ENCODE measurements at regions of chr5 and their contacts with region 1.

Region 1: DNA sequence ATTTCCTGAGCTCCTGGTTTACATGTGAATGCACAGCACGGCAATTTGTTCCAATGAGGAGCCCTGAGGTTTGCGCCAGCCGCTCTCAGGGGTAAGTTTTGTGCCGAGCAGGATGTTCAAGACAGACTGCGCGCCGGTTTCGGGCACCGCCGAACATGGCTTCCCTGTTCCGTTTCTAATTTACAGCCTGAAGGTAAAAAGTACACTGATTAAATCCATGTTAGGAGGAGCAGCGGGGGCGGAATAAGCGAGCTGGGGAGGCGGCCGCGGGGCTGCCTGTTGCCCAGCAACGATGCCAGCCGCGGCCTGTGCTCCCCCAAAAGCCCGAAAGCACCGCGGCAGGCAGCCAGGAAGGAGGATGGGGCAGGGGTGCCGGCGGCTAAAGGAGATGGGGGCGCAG is 6.4 kb downstream of the SOWAHA start:
- DNase-seq: no peak
- H3K4me3 ChIP-seq: no peak overlapping the region
- H3K27ac ChIP-seq: no peak overlapping the region
- H3K4me1 ChIP-seq: peaks cover 0 to 23% (median 12%) of the 10 kb centered on the region in 4 donors
- H3K27me3 ChIP-seq: no peaks in the 10 kb centered on the region
- CTCF ChIP-seq: no peak

Region 2: GRCh38 chr5:132753135-132753987 is 66.1 kb before region 1 on chr5:
- intact Hi-C with region 1: loop called (anchors 5 kb)
- DNase-seq: no peak
- H3K4me3 ChIP-seq: no peak overlapping the region
- H3K27ac ChIP-seq: no peak overlapping the region
- H3K4me1 ChIP-seq: peaks cover 0 to 5% (median 0%) of the 10 kb centered on the region in 4 donors
- H3K27me3 ChIP-seq: no peaks in the 10 kb centered on the region
- CTCF ChIP-seq: no peak

Region 3: DNA sequence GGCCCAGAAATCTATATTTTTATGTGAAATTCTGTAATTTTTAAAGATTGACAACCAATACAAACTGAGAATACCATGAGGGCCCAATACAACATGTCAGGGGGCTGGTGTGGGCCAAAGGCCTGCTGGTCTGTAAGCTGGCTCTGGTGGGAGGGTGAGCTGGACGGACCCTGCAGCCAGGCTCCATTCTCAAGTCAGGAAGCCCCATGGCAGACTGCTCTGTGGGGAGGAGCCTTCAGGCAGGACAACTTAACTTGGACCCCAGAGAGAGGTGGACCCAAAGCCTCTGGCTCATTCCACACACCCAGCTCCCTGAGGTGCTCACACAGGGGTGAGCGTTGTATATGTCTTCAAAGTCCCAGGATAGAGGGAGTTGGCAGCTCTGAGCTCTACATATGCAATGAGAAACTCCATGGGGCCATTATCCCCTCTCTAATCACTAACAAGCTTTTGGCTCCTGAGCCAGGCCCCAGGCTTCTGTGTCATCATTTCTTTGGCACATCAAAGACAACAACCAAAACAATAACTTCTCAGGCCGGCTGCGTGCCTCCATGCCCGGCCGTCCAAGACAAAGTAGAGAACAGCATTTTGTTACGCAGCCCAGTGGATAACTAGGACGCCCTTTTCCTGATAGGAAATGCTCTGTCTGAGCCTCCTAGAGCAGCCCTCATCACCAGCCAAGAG is 48.9 kb before region 1 on chr5:
- intact Hi-C with region 1: no loop called
- DNase-seq: peak in 1 of 2 donors; percentile 78
- H3K4me3 ChIP-seq: no peak overlapping the region
- H3K27ac ChIP-seq: peak overlapping the region; percentile 85 to 98
- H3K4me1 ChIP-seq: peaks cover 0 to 97% (median 80%) of the 10 kb centered on the region in 4 donors
- H3K27me3 ChIP-seq: no peaks in the 10 kb centered on the region
- CTCF ChIP-seq: no peak

Measured in tibial artery (tissue), 4 donors.